ENCODE measurements at regions of chr18 and their contacts with region 1.

Region 1: GRCh38 chr18:23231340-23232021 is 96.2 kb downstream of the CABLES1 start:
- DNase-seq: peak; percentile 91 to 95
- H3K4me3 ChIP-seq: no peak overlapping the region
- H3K27ac ChIP-seq: peak overlapping the region; percentile 89 to 90
- H3K4me1 ChIP-seq: peaks cover 0 to 56% (median 40%) of the 10 kb centered on the region in 4 donors
- H3K27me3 ChIP-seq: no peaks in the 10 kb centered on the region
- CTCF ChIP-seq: no peak

Region 2: GRCh38 chr18:22348521-22349316 is 882.8 kb before region 1 on chr18:
- intact Hi-C with region 1: loop called (anchors 10 kb)
- DNase-seq: peak; percentile 70 to 84
- H3K4me3 ChIP-seq: peak overlapping the region; percentile 58 to 77
- H3K27ac ChIP-seq: peak overlapping the region; percentile 85 to 92
- H3K4me1 ChIP-seq: peaks cover 0 to 41% (median 18%) of the 10 kb centered on the region in 4 donors
- H3K27me3 ChIP-seq: no peaks in the 10 kb centered on the region
- CTCF ChIP-seq: no peak

Region 3: GRCh38 chr18:23291456-23292205 is 60.1 kb after region 1 on chr18:
- intact Hi-C with region 1: no loop called
- DNase-seq: no peak
- H3K4me3 ChIP-seq: no peak overlapping the region
- H3K27ac ChIP-seq: no peak overlapping the region
- H3K4me1 ChIP-seq: peaks cover 0 to 13% (median 6%) of the 10 kb centered on the region in 4 donors
- H3K27me3 ChIP-seq: no peaks in the 10 kb centered on the region
- CTCF ChIP-seq: no peak

Region 4: DNA sequence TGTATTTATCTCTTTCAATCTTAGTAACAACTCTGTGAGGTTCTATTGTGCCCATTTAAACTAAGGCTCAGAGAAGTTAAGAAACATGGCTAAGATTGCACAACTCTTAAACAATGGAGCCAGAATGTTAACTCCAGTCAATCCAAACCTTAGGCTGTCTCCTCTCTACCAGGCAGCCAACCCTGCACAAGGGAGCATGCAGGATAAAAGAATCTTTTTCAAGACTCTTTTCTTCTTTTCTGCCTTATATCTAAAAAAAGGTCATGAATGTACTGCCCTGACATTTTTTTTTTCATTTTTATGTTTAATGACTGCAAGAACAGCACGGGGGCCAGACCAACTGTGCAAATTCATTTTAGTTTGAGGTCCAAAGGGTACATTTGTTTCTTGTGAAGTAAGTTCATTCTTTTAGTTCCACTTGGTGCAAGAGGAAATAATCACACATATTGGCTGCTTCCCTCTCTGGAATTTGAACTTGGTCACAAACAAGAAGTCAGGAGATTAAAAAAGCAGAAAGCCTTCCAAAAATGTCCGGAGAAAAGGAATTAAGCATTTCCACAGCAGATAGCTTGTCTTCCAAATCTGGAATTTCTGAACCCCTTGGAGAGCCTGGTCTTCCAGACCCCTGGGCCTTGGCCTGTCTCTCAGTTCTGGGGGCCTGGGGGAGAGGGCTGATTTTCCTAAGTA is 125.6 kb after region 1 on chr18:
- intact Hi-C with region 1: loop called (anchors 10 kb)
- DNase-seq: no peak
- H3K4me3 ChIP-seq: no peak overlapping the region
- H3K27ac ChIP-seq: peak overlapping the region; percentile 72 to 78
- H3K4me1 ChIP-seq: peaks cover 0 to 49% (median 35%) of the 10 kb centered on the region in 4 donors
- H3K27me3 ChIP-seq: no peaks in the 10 kb centered on the region
- CTCF ChIP-seq: no peak

Measured in tibial artery (tissue), 4 donors.